Mammary epithelial cell (primary cell): ENCODE measurements at regions of chr6 and their contacts with region 1.

Region 1: DNA sequence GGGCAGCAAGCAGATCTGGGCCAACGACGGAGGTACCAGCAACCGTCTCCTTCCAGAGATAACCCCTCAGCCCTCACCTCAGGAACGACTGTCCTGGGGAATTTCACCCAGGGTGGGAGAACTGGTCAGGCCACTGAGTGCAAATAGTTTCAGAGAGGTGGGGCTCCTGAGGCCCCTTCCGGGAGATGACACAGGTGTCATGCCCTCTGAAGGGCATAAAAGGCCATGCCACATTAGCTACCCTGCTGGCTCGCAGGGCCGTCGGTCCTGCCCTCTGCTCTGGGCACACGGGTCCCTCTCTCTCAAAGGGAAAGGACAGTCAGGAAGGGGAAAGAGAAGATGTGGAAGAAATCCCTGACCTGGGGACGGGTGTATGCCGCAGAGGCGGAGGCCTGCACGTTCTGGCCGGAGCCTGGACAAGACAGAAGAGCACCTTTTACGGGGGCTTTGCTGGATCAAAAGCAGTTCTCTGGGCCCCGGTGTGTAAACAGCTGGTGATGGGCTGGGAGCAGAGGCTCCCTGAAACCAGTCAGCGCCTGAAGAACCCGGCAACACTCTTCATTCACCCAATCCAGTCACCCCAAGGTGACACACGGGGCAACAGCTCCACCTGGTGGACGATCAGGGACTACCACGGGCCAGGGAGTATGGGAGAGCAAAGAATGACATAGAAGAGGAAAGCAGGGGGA is 6.4 kb upstream of the TAF8 start:
- DNase-seq: peak; percentile 76
- H3K4me3 ChIP-seq: no peak overlapping the region
- H3K27ac ChIP-seq: peak overlapping the region; percentile 4
- H3K4me1 ChIP-seq: peaks cover 39% of the 10 kb centered on the region
- H3K27me3 ChIP-seq: no peaks in the 10 kb centered on the region
- CTCF ChIP-seq: peak; percentile 94 to 99

Region 2: DNA sequence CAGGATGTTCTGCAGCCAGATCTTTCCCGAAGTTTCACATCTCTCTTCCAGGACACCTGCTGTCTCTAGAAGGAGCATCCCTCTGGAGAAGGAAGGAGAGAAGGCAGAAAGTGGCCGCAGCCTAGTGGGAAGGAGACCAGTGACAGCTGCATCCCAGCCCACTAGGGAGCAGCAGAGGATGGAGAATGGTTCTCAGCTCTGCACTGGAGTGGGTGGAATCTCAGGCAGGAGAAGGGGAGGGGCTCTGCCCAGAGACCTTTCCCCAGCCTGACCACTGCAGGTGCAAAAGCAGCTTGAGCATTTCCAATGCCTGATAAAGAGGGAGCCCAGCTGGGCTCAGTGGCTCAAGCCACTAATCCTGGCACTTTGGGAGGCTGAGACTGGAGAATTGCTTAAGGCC is 676.2 kb before region 1 on chr6:
- CTCF ChIA-PET with region 1: no interaction called
- dilution Hi-C with region 1: no loop called
- in situ Hi-C with region 1: no loop called
- intact Hi-C with region 1: loop called (anchors 10 kb)
- DNase-seq: peak; percentile 24
- H3K4me3 ChIP-seq: no peak overlapping the region
- H3K27ac ChIP-seq: no peak overlapping the region
- H3K4me1 ChIP-seq: peaks cover 20% of the 10 kb centered on the region
- H3K27me3 ChIP-seq: no peaks in the 10 kb centered on the region
- CTCF ChIP-seq: peak; percentile 71 to 77

Region 3: DNA sequence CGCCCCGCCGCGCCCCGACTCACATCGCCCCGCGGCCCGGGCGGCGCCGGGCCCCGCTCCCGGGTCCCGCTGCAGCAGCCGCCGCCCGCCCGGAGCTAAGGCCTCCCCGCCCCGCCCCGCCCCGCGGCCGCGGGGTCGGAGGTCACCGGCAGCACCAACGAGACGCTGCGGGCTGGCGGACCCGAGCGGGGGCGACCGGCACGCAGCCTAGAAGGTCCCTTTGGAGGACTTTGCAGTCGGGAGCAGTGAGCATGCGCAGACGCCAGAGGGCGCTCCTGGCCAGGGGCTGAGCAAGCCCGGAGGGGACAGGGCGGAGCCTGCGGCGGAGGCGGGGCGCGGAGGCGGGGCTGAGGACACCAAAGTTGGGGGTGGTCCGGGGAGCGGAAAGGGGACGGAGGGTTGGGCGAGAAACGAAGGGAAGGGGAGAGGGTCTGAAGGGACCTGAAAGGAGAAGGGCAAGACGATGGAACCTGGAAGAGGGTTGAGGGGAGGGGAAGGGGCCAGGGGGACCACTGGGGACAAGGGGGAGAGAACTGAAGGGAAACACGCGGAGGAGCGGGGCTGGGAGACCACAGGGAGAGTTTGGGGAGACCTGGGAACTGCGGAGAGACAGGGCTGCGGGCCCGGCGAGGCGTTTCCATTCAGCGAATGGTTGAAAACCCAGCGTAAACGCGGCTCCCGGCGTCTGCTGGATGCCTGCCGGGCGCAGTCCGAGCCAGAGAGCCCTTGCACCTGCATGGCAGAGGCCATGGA is 264.0 kb before region 1 on chr6 and contains the start of gene FRS3:
- CTCF ChIA-PET with region 1: interaction called, 3 read pairs
- dilution Hi-C with region 1: loop called (anchors 5 kb)
- in situ Hi-C with region 1: loop called (anchors 5 to 10 kb)
- intact Hi-C with region 1: loop called (anchors 1 kb)
- DNase-seq: peak; percentile 83
- H3K4me3 ChIP-seq: peak within 1 kb of the TSS; percentile 61 to 74 (median 68)
- H3K27ac ChIP-seq: no peak within 1 kb of the TSS
- H3K4me1 ChIP-seq: peaks cover 25% of the 10 kb centered on the region
- H3K27me3 ChIP-seq: no peaks in the 10 kb centered on the region
- CTCF ChIP-seq: peak; percentile 81 to 98
- total RNA-seq, gene FRS3: 1.3 to 4.8 TPM

Region 4: DNA sequence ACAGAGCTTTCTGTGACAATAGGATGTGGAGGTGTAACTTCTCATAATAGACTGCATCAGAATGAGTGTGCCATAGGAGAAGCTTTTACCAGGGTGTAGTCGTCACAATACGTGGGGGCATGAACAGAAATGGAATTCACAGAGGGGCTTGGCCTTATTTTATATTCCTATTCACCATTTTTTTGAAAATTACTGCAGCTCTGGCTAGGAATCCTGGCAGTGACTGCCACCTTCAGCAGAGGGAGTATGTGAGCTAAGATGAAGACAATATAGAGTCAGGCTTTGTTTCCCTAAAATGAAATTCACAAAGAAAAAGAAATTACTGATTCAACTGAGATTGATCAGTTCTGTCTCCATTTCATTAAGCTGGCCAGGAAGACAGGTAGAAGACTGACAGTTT is 242.6 kb before region 1 on chr6:
- CTCF ChIA-PET with region 1: no interaction called
- dilution Hi-C with region 1: no loop called
- in situ Hi-C with region 1: no loop called
- intact Hi-C with region 1: loop called (anchors 1 kb)
- DNase-seq: no peak
- H3K4me3 ChIP-seq: no peak overlapping the region
- H3K27ac ChIP-seq: no peak overlapping the region
- H3K4me1 ChIP-seq: no peaks in the 10 kb centered on the region
- H3K27me3 ChIP-seq: no peaks in the 10 kb centered on the region
- CTCF ChIP-seq: peak; percentile 65 to 70

Region 5: DNA sequence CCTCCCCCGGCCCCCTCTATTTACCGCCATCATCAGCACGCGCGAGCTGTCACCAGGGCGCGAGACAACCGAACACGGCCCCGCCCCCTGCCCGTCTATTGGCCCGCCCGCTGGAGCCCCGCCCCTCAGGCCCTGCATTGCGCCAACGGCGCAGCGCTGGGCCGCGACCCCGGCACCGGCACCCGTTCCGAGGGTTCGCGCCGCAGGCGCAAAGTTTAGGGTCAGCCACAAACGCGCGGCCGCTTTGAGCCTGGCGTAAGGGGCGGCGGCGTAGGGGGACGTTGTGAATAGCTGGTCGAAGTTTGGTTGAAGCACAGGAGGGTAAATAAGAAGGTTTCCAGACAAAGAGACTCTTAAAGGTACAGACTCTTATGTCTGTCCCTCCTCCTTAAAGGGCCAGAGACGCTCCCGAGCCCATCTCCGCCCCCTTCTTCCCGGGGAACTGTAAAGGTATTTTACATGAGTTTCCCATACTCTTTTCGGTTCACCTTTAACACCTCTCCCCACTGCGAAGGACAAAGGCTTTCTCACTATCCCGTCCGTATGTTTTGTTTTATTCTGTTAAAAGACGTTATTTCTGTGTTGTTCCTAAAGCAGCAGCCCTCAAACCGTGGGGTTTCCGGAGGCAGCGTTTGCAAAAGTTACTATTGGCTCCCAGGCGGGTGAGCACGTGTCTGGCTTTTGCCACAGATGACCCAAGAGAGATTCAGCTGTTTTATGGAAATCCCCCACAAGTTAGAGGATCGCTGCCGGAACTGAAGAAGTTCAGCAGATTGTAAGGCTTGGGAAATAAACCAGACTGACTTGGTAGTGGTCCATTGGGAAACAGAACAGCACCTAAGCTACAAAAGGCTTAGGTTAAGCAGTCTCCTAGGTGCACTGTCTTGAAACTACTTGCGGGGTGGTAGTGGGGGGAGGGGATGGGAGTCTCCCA is 148.4 kb before region 1 on chr6 and contains the start of gene USP49:
- CTCF ChIA-PET with region 1: no interaction called
- dilution Hi-C with region 1: no loop called
- in situ Hi-C with region 1: no loop called
- intact Hi-C with region 1: loop called (anchors 2 kb)
- DNase-seq: peak; percentile 79
- H3K4me3 ChIP-seq: peak within 1 kb of the TSS; percentile 86 to 96 (median 92)
- H3K27ac ChIP-seq: peak within 1 kb of the TSS; percentile 82
- H3K4me1 ChIP-seq: peaks cover 16% of the 10 kb centered on the region
- H3K27me3 ChIP-seq: no peaks in the 10 kb centered on the region
- CTCF ChIP-seq: no peak
- total RNA-seq, gene USP49: 3.6 to 3.7 TPM

Region 6: DNA sequence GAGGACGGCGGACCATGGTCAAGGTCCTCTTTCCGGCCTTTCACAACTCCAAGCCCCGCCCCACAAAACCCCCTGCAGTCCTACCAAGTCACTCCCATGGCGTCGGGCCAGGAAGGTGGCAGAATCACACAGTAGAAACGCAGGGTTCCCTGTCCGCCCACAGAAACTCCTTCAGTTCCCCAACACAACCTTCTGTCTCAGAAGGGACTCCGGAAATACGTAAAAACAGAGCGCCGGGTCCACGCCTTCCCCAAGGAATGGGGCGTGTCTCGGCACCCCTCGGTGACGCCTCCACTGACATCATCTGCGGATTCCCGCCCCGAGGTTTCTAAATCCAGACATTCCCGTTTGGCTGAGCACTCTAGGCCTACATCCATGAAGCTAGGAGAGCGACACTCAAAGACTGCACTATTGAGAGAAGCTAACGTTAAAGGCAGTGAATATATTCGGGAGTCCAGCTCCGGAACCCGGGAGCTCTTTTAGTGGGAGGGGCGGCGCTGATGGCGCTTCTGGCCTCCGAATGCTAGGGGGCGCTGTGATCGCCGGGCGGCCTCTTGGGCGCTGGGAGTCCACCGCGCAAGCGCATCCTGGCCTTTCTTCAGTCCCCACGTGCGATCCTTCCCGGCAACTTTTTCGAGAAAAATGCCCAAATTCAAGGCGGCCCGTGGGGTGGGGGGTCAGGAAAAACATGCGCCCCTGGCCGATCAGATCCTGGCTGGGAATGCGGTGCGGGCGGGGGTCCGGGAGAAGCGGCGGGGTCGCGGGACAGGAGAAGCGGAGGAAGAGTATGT is 122.8 kb before region 1 on chr6 and contains the starts of genes BYSL and MED20:
- CTCF ChIA-PET with region 1: no interaction called
- dilution Hi-C with region 1: no loop called
- in situ Hi-C with region 1: no loop called
- intact Hi-C with region 1: loop called (anchors 1 kb)
- DNase-seq: peak; percentile 98
- H3K4me3 ChIP-seq: peak within 1 kb of the TSS; percentile 75 to 92 (median 87)
- H3K27ac ChIP-seq: peak within 1 kb of the TSS; percentile 100
- H3K4me1 ChIP-seq: peaks cover 34% of the 10 kb centered on the region
- H3K27me3 ChIP-seq: no peaks in the 10 kb centered on the region
- CTCF ChIP-seq: peak; percentile 87 to 96
- total RNA-seq, gene BYSL: 14.2 to 52.5 TPM
- total RNA-seq, gene MED20: 22.4 to 23.7 TPM

Region 7: DNA sequence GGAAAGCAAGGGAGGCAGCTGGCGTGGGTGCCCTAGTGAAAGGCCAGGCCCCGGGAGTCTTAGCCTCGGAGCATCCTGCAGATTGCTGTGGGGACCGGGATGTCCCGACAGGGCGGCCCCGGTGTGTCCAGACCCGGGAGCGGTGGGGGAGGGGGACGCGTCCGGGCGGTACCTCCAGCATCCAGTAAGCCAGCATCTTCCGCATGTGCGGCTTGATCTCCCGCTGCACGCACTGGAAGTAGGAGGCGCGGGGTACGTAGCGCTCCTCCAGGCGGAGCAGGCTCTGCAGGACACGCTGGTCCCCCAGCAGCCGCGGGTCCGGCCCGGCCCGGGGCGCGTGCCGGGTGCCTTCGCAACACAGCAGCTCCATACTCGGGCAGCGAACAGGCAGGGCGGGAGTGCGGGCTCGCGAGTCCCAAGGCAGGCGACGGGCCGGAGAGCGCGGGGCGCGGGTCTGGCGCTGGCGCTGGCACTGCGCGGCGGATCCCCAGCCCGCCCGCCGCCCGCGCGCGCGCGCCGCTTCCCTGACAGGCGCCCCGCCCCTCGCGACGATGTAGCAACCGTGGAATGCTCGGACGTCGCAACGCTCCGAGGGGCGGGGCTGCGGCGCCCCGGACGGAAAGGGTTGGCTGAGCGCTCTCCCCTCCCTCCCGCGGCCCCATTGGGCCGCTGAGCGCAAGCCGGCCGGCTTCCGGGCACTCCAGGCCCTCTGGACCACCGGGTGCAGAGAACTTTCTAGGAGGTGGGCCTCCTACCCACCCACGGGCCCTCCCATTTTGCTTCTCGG is 102.5 kb before region 1 on chr6 and contains the start of gene CCND3:
- CTCF ChIA-PET with region 1: interaction called, 6 read pairs
- dilution Hi-C with region 1: no loop called
- in situ Hi-C with region 1: loop called in 1 of 2 experiments (anchors 5 kb)
- intact Hi-C with region 1: loop called (anchors 1 kb)
- DNase-seq: peak; percentile 90
- H3K4me3 ChIP-seq: peak within 1 kb of the TSS; percentile 82 to 95 (median 84)
- H3K27ac ChIP-seq: peak within 1 kb of the TSS; percentile 37
- H3K4me1 ChIP-seq: peaks cover 32% of the 10 kb centered on the region
- H3K27me3 ChIP-seq: no peaks in the 10 kb centered on the region
- CTCF ChIP-seq: no peak
- total RNA-seq, gene CCND3: 45.7 to 80.3 TPM

Region 8: DNA sequence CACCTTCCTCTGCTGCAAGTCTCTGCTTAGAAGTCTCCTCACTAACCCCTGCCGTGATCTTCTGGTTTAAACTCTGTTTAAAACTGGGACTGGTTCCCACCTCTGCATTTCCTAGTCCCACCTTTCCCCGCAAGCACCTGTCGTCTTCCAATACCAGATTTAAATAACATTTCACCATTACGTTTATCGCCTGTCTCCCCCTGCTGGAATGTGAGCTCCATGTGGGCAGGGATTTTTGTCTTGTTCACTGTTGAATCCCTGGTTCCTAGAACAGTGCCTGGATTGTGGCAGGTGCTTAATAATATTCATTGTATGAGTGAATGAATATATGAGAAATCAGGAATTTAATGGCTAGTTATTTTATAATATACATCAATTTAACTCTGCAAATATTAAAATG is 131.9 kb after region 1 on chr6:
- CTCF ChIA-PET with region 1: no interaction called
- dilution Hi-C with region 1: no loop called
- in situ Hi-C with region 1: no loop called
- intact Hi-C with region 1: no loop called
- DNase-seq: no peak
- H3K4me3 ChIP-seq: no peak overlapping the region
- H3K27ac ChIP-seq: no peak overlapping the region
- H3K4me1 ChIP-seq: no peaks in the 10 kb centered on the region
- H3K27me3 ChIP-seq: no peaks in the 10 kb centered on the region
- CTCF ChIP-seq: peak; percentile 24 to 39